CD8-positive, alpha-beta T cell (primary cell): ENCODE measurements at regions of chr1 and their contacts with region 1.

Region 1: GRCh38 chr1:194052514-194053333 is 866.3 kb upstream of the B3GALT2 start:
- DNase-seq: peak in 2 of 9 experiments; percentile 37 to 55
- ATAC-seq: peak; percentile 53
- H3K4me3 ChIP-seq: peak overlapping the region in 1 of 2 experiments; percentile 9
- H3K4me3 Mint-ChIP-seq: peak overlapping the region; percentile 67
- H3K27ac ChIP-seq: peak overlapping the region; percentile 40 to 61
- H3K27ac Mint-ChIP-seq: peak overlapping the region; percentile 96
- H3K4me1 ChIP-seq: peaks cover 59% of the 10 kb centered on the region
- H3K4me1 Mint-ChIP-seq: peaks cover 61% of the 10 kb centered on the region
- H3K27me3 ChIP-seq: no peaks in the 10 kb centered on the region
- H3K27me3 Mint-ChIP-seq: no peaks in the 10 kb centered on the region
- CTCF ChIP-seq: no peak

Region 2: DNA sequence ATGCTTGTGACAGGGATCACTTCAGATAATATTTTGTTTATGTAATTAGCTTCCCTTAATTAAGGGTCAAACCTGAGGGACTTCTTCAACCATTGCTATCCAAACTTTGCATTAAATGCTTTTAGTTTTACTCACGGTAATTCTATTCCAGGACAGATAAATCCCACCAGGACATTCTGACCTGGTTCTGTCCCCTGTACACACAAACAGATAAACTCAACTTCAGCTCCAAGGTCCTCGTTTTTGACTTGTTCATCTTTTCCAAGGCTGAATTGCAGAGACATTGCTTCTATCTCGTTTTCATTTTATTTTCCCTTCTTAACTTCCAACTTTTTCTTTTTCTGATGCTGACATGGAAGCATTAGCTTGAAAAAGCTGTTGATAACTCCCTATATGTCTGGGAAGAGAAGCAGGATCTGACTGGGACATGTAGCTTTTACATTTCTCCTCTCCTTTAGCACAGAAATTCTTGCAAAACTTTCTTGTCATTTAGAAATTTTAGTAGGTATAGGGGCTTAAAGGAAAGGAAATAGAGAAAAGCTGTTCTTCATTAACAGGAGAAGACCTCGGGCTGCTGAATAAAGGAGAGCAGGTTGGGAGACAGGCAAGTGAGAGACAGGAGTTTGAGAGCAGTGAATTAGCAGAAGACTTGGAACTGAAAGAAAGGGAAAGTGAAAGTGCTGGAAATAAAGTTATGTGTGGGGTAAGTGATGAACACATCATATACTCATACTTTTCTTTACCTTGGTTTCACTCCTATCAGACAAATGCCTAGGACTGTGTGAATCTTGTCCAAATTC is 634.6 kb before region 1 on chr1:
- CTCF ChIA-PET with region 1: no interaction called
- POLR2A ChIA-PET with region 1: no interaction called
- intact Hi-C with region 1: loop called in 1 of 2 experiments (anchors 5 kb)
- DNase-seq: peak in 2 of 9 experiments; percentile 49 to 67
- ATAC-seq: peak; percentile 78
- H3K4me3 ChIP-seq: peak overlapping the region; percentile 42 to 49
- H3K4me3 Mint-ChIP-seq: peak overlapping the region; percentile 80
- H3K27ac ChIP-seq: peak overlapping the region; percentile 34 to 46
- H3K27ac Mint-ChIP-seq: peak overlapping the region; percentile 87
- H3K4me1 ChIP-seq: peaks cover 14% of the 10 kb centered on the region
- H3K4me1 Mint-ChIP-seq: peaks cover 39% of the 10 kb centered on the region
- H3K27me3 ChIP-seq: no peaks in the 10 kb centered on the region
- H3K27me3 Mint-ChIP-seq: no peaks in the 10 kb centered on the region
- CTCF ChIP-seq: no peak

Region 3: GRCh38 chr1:194014014-194014413 is 38.7 kb before region 1 on chr1:
- CTCF ChIA-PET with region 1: no interaction called
- POLR2A ChIA-PET with region 1: no interaction called
- intact Hi-C with region 1: no loop called
- DNase-seq: no peak
- ATAC-seq: no peak
- H3K4me3 ChIP-seq: no peak overlapping the region
- H3K4me3 Mint-ChIP-seq: no peak overlapping the region
- H3K27ac ChIP-seq: no peak overlapping the region
- H3K27ac Mint-ChIP-seq: no peak overlapping the region
- H3K4me1 ChIP-seq: no peaks in the 10 kb centered on the region
- H3K4me1 Mint-ChIP-seq: no peaks in the 10 kb centered on the region
- H3K27me3 ChIP-seq: no peaks in the 10 kb centered on the region
- H3K27me3 Mint-ChIP-seq: no peaks in the 10 kb centered on the region
- CTCF ChIP-seq: no peak

Region 4: GRCh38 chr1:194039578-194039977 is 13.1 kb before region 1 on chr1:
- CTCF ChIA-PET with region 1: no interaction called
- POLR2A ChIA-PET with region 1: interaction called, 4 read pairs
- intact Hi-C with region 1: loop called in 1 of 2 experiments (anchors 2 kb)
- DNase-seq: no peak
- ATAC-seq: no peak
- H3K4me3 ChIP-seq: no peak overlapping the region
- H3K4me3 Mint-ChIP-seq: peak overlapping the region; percentile 62
- H3K27ac ChIP-seq: no peak overlapping the region
- H3K27ac Mint-ChIP-seq: peak overlapping the region; percentile 18
- H3K4me1 ChIP-seq: peaks cover 27% of the 10 kb centered on the region
- H3K4me1 Mint-ChIP-seq: peaks cover 22% of the 10 kb centered on the region
- H3K27me3 ChIP-seq: no peaks in the 10 kb centered on the region
- H3K27me3 Mint-ChIP-seq: no peaks in the 10 kb centered on the region
- CTCF ChIP-seq: no peak

Region 5: GRCh38 chr1:194289569-194290266 is 237.0 kb after region 1 on chr1:
- CTCF ChIA-PET with region 1: no interaction called
- POLR2A ChIA-PET with region 1: interaction called, 8 read pairs
- intact Hi-C with region 1: loop called in 1 of 2 experiments (anchors 5 kb)
- DNase-seq: peak in 8 of 9 experiments; percentile 12 to 85 (median 46)
- ATAC-seq: peak; percentile 95
- H3K4me3 ChIP-seq: peak overlapping the region in 1 of 2 experiments; percentile 2
- H3K4me3 Mint-ChIP-seq: peak overlapping the region; percentile 32
- H3K27ac ChIP-seq: no peak overlapping the region
- H3K27ac Mint-ChIP-seq: peak overlapping the region; percentile 28
- H3K4me1 ChIP-seq: peaks cover 20% of the 10 kb centered on the region
- H3K4me1 Mint-ChIP-seq: peaks cover 35% of the 10 kb centered on the region
- H3K27me3 ChIP-seq: no peaks in the 10 kb centered on the region
- H3K27me3 Mint-ChIP-seq: no peaks in the 10 kb centered on the region
- CTCF ChIP-seq: no peak